ENCODE measurements at regions of chr19 and their contacts with region 1.

Region 1: GRCh38 chr19:2648528-2648937 is 54.0 kb downstream of the GNG7 start:
- DNase-seq: peak; percentile 43 to 88
- H3K4me3 ChIP-seq: no peak overlapping the region
- H3K27ac ChIP-seq: no peak overlapping the region
- H3K4me1 ChIP-seq: peaks cover 0 to 1% (median 0%) of the 10 kb centered on the region in 4 experiments; a peak in 2 of 7 replicates
- H3K27me3 ChIP-seq: no peaks in the 10 kb centered on the region; a peak in 1 of 7 replicates
- CTCF ChIP-seq: peak; percentile 85 to 92 (median 90)
- EP300 ChIP-seq: no peak
- POLR2A ChIP-seq: no peak
- RAD21 ChIP-seq: peak; percentile 99

Region 2: DNA sequence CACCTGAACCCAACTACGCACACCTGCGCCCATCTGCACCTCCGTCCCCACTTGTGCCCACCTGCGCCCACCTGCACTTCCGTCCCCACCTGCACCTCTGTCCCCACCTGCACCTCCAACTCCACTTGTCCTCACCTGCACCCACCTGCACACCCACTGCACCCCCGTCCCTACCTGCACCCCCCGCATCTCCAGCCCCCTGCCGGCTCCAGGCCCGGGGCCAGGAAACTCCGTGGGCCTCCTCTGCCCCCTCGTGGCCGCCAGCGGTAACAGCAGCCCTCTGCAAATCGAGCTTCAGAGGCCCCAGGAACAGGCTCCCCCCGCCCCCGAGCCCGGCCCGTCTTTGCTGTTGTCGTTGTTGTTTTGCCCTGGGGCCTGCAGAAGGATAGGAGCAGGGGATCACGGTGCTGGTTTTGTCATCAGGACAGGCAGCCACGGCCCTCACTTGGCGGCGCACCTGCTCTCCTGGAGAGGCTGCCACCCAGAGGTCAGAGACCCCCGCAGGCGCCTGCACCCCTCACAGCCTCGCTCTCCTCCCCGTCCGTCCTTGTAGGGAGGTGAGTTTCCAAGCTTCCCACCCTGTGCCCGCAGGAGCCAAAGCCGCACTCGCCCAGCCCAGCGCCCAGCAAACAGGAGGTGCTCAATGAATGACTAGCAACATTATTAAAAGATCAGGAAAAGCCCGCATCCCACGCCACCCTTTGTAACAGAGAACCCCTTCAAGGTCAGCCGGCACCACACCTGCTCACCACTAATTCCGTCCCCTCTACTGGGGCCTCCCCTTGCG is 11.4 kb before region 1 on chr19:
- CTCF ChIA-PET with region 1: interaction called, 22 read pairs
- POLR2A ChIA-PET with region 1: no interaction called
- DNase-seq: peak in 1 of 2 experiments; percentile 89
- H3K4me3 ChIP-seq: peak overlapping the region in 3 of 4 experiments; percentile 36 to 54 (median 38); a peak in 6 of 8 replicates
- H3K27ac ChIP-seq: no peak overlapping the region
- H3K4me1 ChIP-seq: peaks cover 0 to 4% (median 2%) of the 10 kb centered on the region in 4 experiments; a peak in 3 of 7 replicates
- H3K27me3 ChIP-seq: no peaks in the 10 kb centered on the region; a peak in 1 of 7 replicates
- CTCF ChIP-seq: peak; percentile 78 to 84 (median 82)
- EP300 ChIP-seq: no peak
- POLR2A ChIP-seq: no peak
- RAD21 ChIP-seq: peak; percentile 83 to 85

Region 3: GRCh38 chr19:2678043-2678671 is 29.6 kb after region 1 on chr19:
- CTCF ChIA-PET with region 1: interaction called, 10 read pairs
- POLR2A ChIA-PET with region 1: no interaction called
- DNase-seq: no peak
- H3K4me3 ChIP-seq: no peak overlapping the region
- H3K27ac ChIP-seq: no peak overlapping the region
- H3K4me1 ChIP-seq: peaks cover 5 to 10% (median 5%) of the 10 kb centered on the region in 4 experiments
- H3K27me3 ChIP-seq: no peaks in the 10 kb centered on the region; a peak in 2 of 7 replicates
- CTCF ChIP-seq: no peak
- EP300 ChIP-seq: no peak
- POLR2A ChIP-seq: no peak
- RAD21 ChIP-seq: no peak

Region 4: GRCh38 chr19:2739602-2740313 is 91.2 kb after region 1 on chr19 and contains the start of gene SLC39A3:
- CTCF ChIA-PET with region 1: interaction called, 13 read pairs
- POLR2A ChIA-PET with region 1: interaction called, 3 read pairs
- DNase-seq: peak; percentile 96 to 100
- H3K4me3 ChIP-seq: peak within 1 kb of the TSS; percentile 79 to 96 (median 84)
- H3K27ac ChIP-seq: no peak within 1 kb of the TSS
- H3K4me1 ChIP-seq: no peaks in the 10 kb centered on the region
- H3K27me3 ChIP-seq: no peaks in the 10 kb centered on the region
- CTCF ChIP-seq: no peak; a peak in 1 of 4 replicates
- EP300 ChIP-seq: peak in 1 of 2 experiments; percentile 89; a peak in 2 of 3 replicates
- POLR2A ChIP-seq: no peak; a peak in 1 of 3 replicates
- RAD21 ChIP-seq: peak in 1 of 2 experiments; percentile 42; a peak in 2 of 4 replicates
- total RNA-seq, gene SLC39A3: 33.0 and 35.8 TPM in 2 replicates

Region 5: DNA sequence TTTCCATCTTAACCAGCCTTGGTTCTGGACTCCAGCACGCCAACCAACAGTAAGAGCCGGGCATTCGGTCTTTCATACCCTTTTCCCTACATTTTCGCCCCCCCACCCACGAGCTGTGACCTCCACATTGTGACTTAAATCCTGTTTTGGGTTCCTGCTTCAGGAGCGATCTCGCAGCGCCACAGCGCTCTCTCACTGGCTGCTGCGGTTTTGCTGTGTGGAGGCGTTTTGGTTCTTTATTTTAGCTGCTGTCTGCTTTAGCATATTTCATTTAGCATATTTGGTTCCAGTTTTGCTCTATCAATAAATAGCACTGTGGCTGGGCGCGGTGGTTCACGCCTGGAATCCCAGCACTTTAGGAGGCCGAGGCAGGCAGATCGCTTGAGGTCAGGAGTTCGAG is 110.8 kb after region 1 on chr19:
- CTCF ChIA-PET with region 1: interaction called, 117 read pairs
- POLR2A ChIA-PET with region 1: no interaction called
- DNase-seq: no peak
- H3K4me3 ChIP-seq: no peak overlapping the region
- H3K27ac ChIP-seq: no peak overlapping the region
- H3K4me1 ChIP-seq: no peaks in the 10 kb centered on the region
- H3K27me3 ChIP-seq: no peaks in the 10 kb centered on the region
- CTCF ChIP-seq: no peak
- EP300 ChIP-seq: no peak
- POLR2A ChIP-seq: no peak
- RAD21 ChIP-seq: no peak

Measured in H1 (cell line).